ENCODE measurements at regions of chr2 and their contacts with region 1.

Region 1: DNA sequence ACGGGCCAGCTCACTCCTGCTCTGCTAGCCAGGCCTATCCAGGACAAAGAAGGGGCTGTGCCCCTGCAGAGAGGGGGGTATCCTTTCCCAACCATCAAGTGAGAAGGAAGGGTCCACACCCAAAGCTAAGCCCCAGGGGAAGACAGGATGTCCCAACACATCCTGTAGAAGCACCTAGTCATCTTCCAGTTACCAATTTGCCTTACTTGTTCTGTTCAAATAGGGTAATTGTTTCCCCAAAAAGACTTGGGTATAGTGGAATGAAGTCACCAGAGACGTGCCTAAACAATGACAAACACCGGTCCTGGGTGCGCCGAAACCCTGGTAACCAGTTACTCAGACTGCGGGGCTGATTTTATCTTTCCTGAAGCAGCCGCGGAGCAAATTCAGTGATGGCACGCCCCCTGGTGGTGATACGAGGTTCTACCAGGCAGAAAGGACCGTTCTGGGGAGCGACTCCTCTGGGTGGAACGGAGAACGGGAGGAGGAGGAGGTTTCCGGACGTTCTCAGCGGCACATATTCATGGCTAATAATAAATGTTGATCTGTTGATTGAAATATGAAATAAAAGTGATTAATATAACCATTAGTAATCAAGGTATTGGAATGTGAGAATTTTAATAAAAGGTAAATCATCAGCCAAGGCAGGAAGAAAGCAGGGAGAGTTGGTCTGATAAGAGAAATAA is 109.3 kb upstream of the STON1 start:
- DNase-seq: peak; percentile 94
- ATAC-seq: peak; percentile 86

Region 2: DNA sequence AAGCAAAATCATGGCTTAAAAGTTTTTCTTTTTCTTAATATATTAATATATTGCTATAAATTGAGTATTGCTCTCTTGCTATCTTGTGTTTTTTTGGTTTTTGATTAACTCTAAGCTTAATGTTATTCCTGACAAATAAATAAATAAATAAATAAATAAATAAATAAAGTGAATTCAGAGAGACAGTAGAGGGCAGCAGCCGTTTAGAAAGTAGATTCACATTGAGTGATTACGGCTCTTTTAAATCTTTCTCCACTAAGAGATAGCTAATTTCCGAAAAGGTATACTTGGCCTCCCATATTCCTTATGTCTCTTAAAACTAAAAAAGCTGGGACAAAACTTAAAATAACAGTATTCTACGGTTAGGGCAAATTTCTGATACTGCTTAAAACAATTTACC is 983.4 kb before region 1 on chr2:
- intact Hi-C with region 1: loop called (anchors 10 kb)
- DNase-seq: no peak
- ATAC-seq: no peak

Region 3: DNA sequence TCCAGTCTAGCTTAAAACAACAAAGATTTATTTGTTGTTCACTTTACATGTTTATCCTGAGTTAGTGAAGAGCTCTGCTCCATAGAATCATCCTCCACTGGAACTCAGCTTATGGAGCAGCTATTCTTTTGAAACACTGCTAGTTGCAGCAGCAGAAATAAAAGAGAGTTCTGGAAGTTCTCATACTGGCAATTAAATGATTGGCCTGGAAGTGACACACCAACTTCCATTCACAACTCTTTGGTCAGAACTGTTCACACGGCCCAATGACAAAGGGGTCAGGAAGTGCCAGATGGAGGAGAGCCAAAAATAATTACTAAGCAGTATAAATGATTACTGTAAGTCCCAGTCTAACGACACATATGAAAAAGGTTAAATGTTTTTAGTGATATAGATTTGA is 553.5 kb before region 1 on chr2:
- intact Hi-C with region 1: loop called (anchors 5 kb)
- DNase-seq: no peak
- ATAC-seq: peak; percentile 88

Region 4: GRCh38 chr2:47906157-47907038 is 514.3 kb before region 1 on chr2 and contains the start of gene FBXO11:
- intact Hi-C with region 1: loop called (anchors 5 kb)
- DNase-seq: peak; percentile 97
- ATAC-seq: peak; percentile 97
- total RNA-seq, gene FBXO11: 35.6 TPM